ENCODE measurements at regions of chr2 and their contacts with region 1.

Region 1: GRCh38 chr2:6922201-6922685 is 5.0 kb downstream of the RNF144A start:
- DNase-seq: no peak
- H3K4me3 ChIP-seq: peak overlapping the region in 1 of 8 donors; percentile 5
- H3K27ac ChIP-seq: peak overlapping the region in 6 of 8 donors; percentile 41 to 94 (median 76)
- H3K4me1 ChIP-seq: peaks cover 35 to 93% (median 84%) of the 10 kb centered on the region in 6 donors
- H3K27me3 ChIP-seq: peaks cover 0 to 8% (median 0%) of the 10 kb centered on the region in 7 donors
- CTCF ChIP-seq: peak in 3 of 11 experiments; percentile 17 to 24 (median 21)
- POLR2A ChIP-seq: no peak

Region 2: DNA sequence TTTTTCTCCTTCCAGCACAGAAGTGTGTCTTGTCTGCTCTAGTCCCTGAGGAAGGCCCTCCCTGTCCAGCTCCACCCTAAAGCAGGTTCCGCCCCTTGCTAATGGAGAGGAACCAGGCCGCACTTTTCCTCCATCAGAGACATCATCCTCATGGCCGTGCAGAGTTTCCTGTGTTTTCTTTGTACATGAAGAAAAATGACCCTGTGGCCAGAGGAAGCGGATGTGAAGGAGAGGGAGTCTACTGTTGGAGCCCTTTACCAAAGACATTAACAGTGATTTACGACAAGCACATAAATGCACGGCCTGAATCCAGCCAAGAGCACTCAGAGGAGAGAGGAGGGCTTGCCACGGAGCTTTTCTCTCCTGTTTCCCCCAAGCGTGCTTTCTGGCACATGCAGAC is 104.5 kb after region 1 on chr2:
- intact Hi-C with region 1: loop called (anchors 5 kb)
- DNase-seq: peak; percentile 78
- H3K4me3 ChIP-seq: no peak overlapping the region
- H3K27ac ChIP-seq: peak overlapping the region; percentile 48 to 90 (median 78)
- H3K4me1 ChIP-seq: peaks cover 14 to 98% (median 77%) of the 10 kb centered on the region in 6 donors
- H3K27me3 ChIP-seq: no peaks in the 10 kb centered on the region
- CTCF ChIP-seq: no peak
- POLR2A ChIP-seq: no peak